ENCODE measurements at regions of chr10 and their contacts with region 1.

Region 1: GRCh38 chr10:4767033-4767814 is 58.8 kb upstream of the AKR1E2 start:
- DNase-seq: peak; percentile 3
- ATAC-seq: no peak
- H3K4me3 ChIP-seq: no peak overlapping the region
- H3K27ac ChIP-seq: no peak overlapping the region
- H3K4me1 ChIP-seq: peaks cover 13% of the 10 kb centered on the region
- H3K27me3 ChIP-seq: 0 out of 5 replicates have a peak, but pooled peaks cover 0 to 4% of the 10 kb centered on the region in 2 experiments
- CTCF ChIP-seq: peak; percentile 56
- EP300 ChIP-seq: no peak
- POLR2A ChIP-seq: no peak
- RAD21 ChIP-seq: no peak

Region 2: GRCh38 chr10:3197348-3198003 is 1569.7 kb before region 1 on chr10:
- CTCF ChIA-PET with region 1: interaction called, 3 read pairs
- POLR2A ChIA-PET with region 1: no interaction called
- in situ Hi-C with region 1: loop called (anchors 5 kb)
- intact Hi-C with region 1: no loop called
- DNase-seq: peak; percentile 36
- ATAC-seq: peak; percentile 98
- H3K4me3 ChIP-seq: no peak overlapping the region
- H3K27ac ChIP-seq: no peak overlapping the region
- H3K4me1 ChIP-seq: 0 out of 2 replicates have a peak, but pooled peaks cover 4% of the 10 kb centered on the region
- H3K27me3 ChIP-seq: peaks cover 10 to 78% of the 10 kb centered on the region in 2 experiments
- CTCF ChIP-seq: peak; percentile 93
- EP300 ChIP-seq: no peak
- POLR2A ChIP-seq: no peak
- RAD21 ChIP-seq: peak; percentile 91

Region 3: DNA sequence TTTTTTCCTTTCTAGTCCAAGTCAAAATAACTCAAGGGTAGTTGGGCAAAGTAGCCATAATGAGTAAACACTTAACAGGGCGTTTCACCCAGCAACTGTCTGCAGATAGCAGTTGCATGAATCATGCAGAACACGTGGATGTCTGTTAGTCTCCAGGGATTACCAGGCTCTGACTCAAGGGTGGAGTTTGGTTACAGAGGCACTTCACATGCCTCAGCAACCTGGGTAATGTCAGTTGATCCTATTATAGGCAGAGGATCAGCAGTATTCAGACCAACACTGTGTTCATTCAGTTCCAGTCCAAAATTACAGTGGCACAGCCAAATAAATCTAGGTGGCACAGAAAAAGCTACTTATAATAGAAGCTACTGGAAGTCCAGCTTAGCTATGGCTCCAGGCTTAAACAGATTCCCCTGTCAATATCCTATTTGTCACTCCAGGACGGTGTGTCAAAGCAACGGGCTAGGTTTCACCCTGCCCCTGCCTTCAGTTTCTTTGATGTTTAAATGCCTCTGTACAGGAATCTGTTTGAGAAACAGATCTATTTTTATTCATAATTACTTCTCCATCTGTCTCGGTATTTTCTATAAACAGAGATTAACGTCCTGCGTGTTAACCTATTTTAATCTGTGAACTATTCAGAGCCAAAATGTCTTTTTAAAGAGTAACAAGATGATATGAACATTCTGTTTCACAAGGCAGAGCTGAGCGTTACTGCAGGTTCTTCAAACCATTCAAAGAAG is 103.9 kb before region 1 on chr10:
- CTCF ChIA-PET with region 1: no interaction called
- POLR2A ChIA-PET with region 1: no interaction called
- in situ Hi-C with region 1: no loop called
- intact Hi-C with region 1: loop called (anchors 5 kb)
- DNase-seq: peak; percentile 85
- ATAC-seq: peak; percentile 82
- H3K4me3 ChIP-seq: 0 out of 6 replicates have a peak overlapping the region, but pooled peaks of 1 of the 3 experiments have one; percentile 0
- H3K27ac ChIP-seq: peak overlapping the region; percentile 25
- H3K4me1 ChIP-seq: peaks cover 41% of the 10 kb centered on the region
- H3K27me3 ChIP-seq: no peaks in the 10 kb centered on the region
- CTCF ChIP-seq: no peak
- EP300 ChIP-seq: peak in 1 of 2 experiments; percentile 63; a peak in 1 of 4 replicates
- POLR2A ChIP-seq: no peak
- RAD21 ChIP-seq: no peak

Region 4: GRCh38 chr10:4733151-4733842 is 33.9 kb before region 1 on chr10:
- CTCF ChIA-PET with region 1: no interaction called
- POLR2A ChIA-PET with region 1: no interaction called
- in situ Hi-C with region 1: no loop called
- intact Hi-C with region 1: no loop called
- DNase-seq: peak; percentile 48
- ATAC-seq: peak; percentile 31; the same call in 2 of the 3 replicates
- H3K4me3 ChIP-seq: no peak overlapping the region
- H3K27ac ChIP-seq: no peak overlapping the region
- H3K4me1 ChIP-seq: peaks cover 10% of the 10 kb centered on the region; the same call in 1 of the 2 replicates
- H3K27me3 ChIP-seq: no peaks in the 10 kb centered on the region; a peak in 1 of 5 replicates
- CTCF ChIP-seq: no peak
- EP300 ChIP-seq: peak in 1 of 2 experiments; percentile 25; a peak in 1 of 4 replicates
- POLR2A ChIP-seq: no peak
- RAD21 ChIP-seq: no peak

Measured in HepG2 (cell line).